ENCODE measurements at regions of chr13 and their contacts with region 1.

Region 1: GRCh38 chr13:77026818-77027585 is at the start of gene FBXL3:
- DNase-seq: peak; percentile 67 to 80
- ATAC-seq: peak; percentile 70 to 72
- H3K4me3 ChIP-seq: peak within 1 kb of the TSS; percentile 65 to 98 (median 78)
- H3K27ac ChIP-seq: peak within 1 kb of the TSS; percentile 93 to 100 (median 96)
- H3K4me1 ChIP-seq: peaks cover 43 to 51% of the 10 kb centered on the region in 2 donors
- H3K27me3 ChIP-seq: no peaks in the 10 kb centered on the region
- CTCF ChIP-seq: peak in 1 of 5 experiments; percentile 9
- POLR2A ChIP-seq: peak; percentile 57 to 77
- total RNA-seq, gene FBXL3: 50.6 to 75.6 (median 64.4) TPM

Region 2: GRCh38 chr13:76886292-76887075 is 140.5 kb before region 1 on chr13 and contains the start of gene KCTD12:
- in situ Hi-C with region 1: no loop called
- intact Hi-C with region 1: loop called (anchors 10 kb)
- DNase-seq: peak; percentile 67 to 74
- ATAC-seq: peak; percentile 64 to 66
- H3K4me3 ChIP-seq: peak within 1 kb of the TSS; percentile 71 to 82 (median 76)
- H3K27ac ChIP-seq: peak within 1 kb of the TSS; percentile 69 to 85 (median 82)
- H3K4me1 ChIP-seq: peaks cover 0 to 7% of the 10 kb centered on the region in 2 donors
- H3K27me3 ChIP-seq: peaks cover 3 to 25% (median 24%) of the 10 kb centered on the region in 3 donors
- CTCF ChIP-seq: peak in 2 of 5 experiments; percentile 24 to 42
- POLR2A ChIP-seq: peak; percentile 60 to 83
- total RNA-seq, gene KCTD12: 17.3 to 35.9 (median 27.1) TPM

Region 3: DNA sequence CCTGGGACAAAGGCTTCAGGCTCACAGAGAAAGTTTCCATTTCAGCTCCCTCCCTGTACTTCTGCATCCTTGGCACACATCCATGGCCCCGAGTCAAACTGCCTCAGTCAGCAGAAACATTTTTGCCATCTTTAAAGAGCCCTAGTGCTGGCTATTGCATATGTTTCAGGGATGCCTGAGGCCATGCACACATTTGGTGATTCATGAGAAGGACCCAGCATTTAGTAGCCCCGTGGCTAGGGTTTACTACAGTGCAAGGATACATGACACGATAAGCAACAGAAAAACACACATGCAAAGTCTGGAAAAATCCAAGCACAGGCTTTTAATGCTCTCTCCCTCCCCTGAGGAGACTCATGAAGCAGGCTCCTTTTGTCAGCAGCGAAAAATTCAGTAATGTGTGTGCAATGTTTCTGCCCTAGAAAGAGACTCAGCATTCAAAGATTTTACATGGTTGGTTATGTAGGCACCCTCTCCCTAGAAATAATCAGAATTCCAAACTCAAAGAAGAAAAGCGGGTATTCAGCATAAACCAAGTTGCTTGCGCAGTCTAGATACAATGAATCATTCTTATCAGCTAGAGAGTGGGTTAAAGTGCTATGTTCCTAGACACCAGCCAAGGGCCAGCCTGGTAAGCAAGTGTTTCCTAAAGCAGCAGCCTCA is 61.1 kb before region 1 on chr13:
- in situ Hi-C with region 1: no loop called
- intact Hi-C with region 1: no loop called
- DNase-seq: peak; percentile 6 to 16
- ATAC-seq: no peak
- H3K4me3 ChIP-seq: no peak overlapping the region
- H3K27ac ChIP-seq: no peak overlapping the region
- H3K4me1 ChIP-seq: no peaks in the 10 kb centered on the region
- H3K27me3 ChIP-seq: no peaks in the 10 kb centered on the region
- CTCF ChIP-seq: no peak
- POLR2A ChIP-seq: no peak

Region 4: DNA sequence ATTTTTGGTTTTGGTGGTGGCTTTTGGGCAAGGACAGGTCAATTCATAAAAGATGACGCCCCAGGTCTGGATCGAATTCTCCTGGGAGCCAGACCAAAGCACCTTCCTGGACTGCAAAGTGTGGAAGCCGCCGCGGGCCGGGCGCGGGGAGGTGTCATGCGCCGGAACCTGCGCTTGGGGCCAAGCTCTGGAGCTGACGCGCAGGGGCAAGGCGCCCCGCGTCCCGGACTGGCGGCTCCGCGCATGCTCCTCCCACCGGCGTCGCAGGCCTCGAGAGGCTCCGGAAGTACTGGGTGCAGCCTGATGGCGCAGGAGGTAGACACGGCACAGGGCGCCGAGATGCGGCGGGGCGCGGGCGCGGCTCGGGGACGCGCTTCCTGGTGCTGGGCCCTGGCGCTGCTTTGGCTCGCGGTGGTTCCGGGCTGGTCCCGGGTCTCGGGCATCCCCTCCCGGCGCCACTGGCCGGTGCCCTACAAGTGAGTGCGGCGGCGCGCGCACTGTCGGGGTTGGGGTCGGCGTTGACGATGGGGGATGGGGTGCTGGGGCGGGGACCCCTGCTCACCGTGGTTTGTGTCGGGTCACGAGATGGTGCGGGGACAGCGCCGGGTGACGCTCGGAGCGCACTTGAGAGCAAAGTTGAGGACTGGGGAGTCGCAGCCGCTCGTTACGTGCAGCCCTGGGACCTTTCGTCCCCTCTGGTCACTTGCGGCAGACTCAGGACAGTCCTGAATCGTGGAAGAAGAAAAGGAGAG is 35.0 kb before region 1 on chr13 and contains the start of gene CLN5:
- in situ Hi-C with region 1: no loop called
- intact Hi-C with region 1: loop called (anchors 1 kb)
- DNase-seq: peak; percentile 92 to 95
- ATAC-seq: peak; percentile 90 to 92
- H3K4me3 ChIP-seq: peak within 1 kb of the TSS; percentile 72 to 92 (median 86)
- H3K27ac ChIP-seq: peak within 1 kb of the TSS; percentile 89 to 95 (median 92)
- H3K4me1 ChIP-seq: peaks cover 14 to 15% of the 10 kb centered on the region in 2 donors
- H3K27me3 ChIP-seq: no peaks in the 10 kb centered on the region
- CTCF ChIP-seq: peak in 2 of 5 experiments; percentile 11 to 23
- POLR2A ChIP-seq: peak; percentile 89
- total RNA-seq, gene CLN5: 4.5 to 10.1 (median 7.1) TPM

Region 5: DNA sequence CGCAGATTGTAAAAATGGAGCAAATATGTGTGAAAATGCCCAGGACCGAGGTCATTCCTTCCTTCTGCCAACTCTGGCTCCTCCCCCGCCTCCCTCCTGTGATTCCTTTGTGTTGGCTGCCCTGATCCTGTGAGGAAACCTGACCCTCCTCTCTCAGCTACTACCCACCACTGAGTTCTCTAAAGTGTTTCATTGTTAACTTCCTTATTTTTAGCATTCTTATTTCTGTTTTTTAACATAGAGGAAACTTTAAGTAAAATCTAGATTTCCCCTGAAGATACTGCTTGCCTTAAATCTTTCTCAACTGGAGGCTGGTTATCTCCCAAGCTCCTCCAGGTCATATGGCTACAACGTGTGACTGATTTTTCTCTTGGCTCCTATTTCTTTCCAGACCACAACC is 21.7 kb after region 1 on chr13:
- in situ Hi-C with region 1: no loop called
- intact Hi-C with region 1: loop called (anchors 1 kb)
- DNase-seq: no peak
- ATAC-seq: peak; percentile 38 to 57
- H3K4me3 ChIP-seq: no peak overlapping the region
- H3K27ac ChIP-seq: peak overlapping the region; percentile 76 to 81 (median 76)
- H3K4me1 ChIP-seq: peaks cover 15 to 20% of the 10 kb centered on the region in 2 donors
- H3K27me3 ChIP-seq: no peaks in the 10 kb centered on the region
- CTCF ChIP-seq: no peak
- POLR2A ChIP-seq: no peak

Region 6: GRCh38 chr13:77094773-77095172 is 67.8 kb after region 1 on chr13:
- in situ Hi-C with region 1: no loop called
- intact Hi-C with region 1: no loop called
- DNase-seq: no peak
- ATAC-seq: no peak
- H3K4me3 ChIP-seq: no peak overlapping the region
- H3K27ac ChIP-seq: no peak overlapping the region
- H3K4me1 ChIP-seq: no peaks in the 10 kb centered on the region
- H3K27me3 ChIP-seq: no peaks in the 10 kb centered on the region
- CTCF ChIP-seq: no peak
- POLR2A ChIP-seq: no peak

Region 7: DNA sequence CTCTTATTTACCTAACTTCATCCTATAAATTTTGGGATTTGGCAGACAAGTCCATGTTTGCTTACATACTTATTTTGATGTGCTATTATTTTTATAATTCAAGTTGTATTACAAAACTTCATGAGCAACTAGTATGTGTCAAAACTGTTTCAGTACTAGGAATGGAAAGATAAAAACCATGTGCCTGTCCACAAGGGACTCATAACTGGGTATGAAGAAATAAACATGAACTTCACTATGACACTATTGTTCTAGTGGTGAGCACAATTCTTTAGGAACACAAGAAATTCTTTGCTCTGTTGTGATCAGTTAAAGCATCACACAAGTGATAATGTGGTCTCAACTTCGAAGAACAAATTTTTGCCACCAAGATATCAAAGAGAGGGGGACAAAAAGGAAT is 97.4 kb after region 1 on chr13:
- in situ Hi-C with region 1: no loop called
- intact Hi-C with region 1: no loop called
- DNase-seq: no peak
- ATAC-seq: no peak
- H3K4me3 ChIP-seq: no peak overlapping the region
- H3K27ac ChIP-seq: no peak overlapping the region
- H3K4me1 ChIP-seq: peaks cover 0 to 3% of the 10 kb centered on the region in 2 donors
- H3K27me3 ChIP-seq: no peaks in the 10 kb centered on the region
- CTCF ChIP-seq: no peak
- POLR2A ChIP-seq: no peak

Region 8: DNA sequence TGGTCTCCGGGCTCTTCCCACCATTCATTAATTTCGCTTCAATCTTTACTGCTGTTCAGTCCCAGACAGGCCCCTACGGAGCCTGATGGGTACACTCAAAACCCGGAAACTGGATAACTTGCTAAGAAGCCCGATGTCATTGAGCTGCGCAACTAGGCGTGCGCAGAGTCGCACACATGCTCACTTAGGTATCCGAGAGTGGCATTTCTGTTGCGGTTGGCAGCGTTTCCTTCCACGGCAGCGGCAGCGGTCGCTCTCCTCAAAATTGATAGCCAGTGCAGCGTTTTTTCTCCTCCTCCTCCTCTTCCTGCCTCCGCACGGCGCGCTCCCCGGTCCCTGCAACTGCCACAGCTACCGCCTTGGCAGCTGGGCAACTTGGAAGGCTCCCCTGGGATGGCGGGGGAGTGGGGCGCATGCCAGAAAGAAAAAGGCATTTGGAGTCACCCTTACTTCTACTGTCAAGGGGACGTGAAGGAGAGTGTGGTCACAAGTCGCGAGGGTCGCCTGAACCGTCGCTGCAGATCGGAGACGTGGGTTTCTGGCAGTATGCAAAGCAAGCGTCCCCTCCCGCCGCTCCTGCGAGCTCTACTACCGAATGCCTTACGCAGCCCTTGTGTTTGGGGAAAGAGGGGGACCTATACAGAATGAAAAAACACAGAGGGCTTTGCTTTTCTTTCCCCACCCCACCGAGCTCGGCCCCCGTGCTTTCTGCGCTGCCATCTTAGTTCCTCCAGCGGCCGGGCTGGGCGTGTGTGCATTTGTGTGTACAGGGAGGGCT is 302.3 kb after region 1 on chr13:
- in situ Hi-C with region 1: no loop called
- intact Hi-C with region 1: loop called (anchors 1 kb)
- DNase-seq: peak; percentile 78 to 86
- ATAC-seq: peak; percentile 62 to 71
- H3K4me3 ChIP-seq: peak overlapping the region; percentile 88 to 100 (median 91)
- H3K27ac ChIP-seq: peak overlapping the region; percentile 86 to 95 (median 93)
- H3K4me1 ChIP-seq: peaks cover 24 to 29% of the 10 kb centered on the region in 2 donors
- H3K27me3 ChIP-seq: no peaks in the 10 kb centered on the region
- CTCF ChIP-seq: peak in 1 of 5 experiments; percentile 2
- POLR2A ChIP-seq: peak; percentile 44 to 73